Esophagus muscularis mucosa (tissue), 4 donors: ENCODE measurements at regions of chr12 and their contacts with region 1.

Region 1: GRCh38 chr12:55797068-55797467 is 20.5 kb downstream of the SARNP start:
- DNase-seq: no peak
- H3K4me3 ChIP-seq: no peak overlapping the region
- H3K27ac ChIP-seq: no peak overlapping the region
- H3K4me1 ChIP-seq: peaks cover 0 to 9% (median 0%) of the 10 kb centered on the region in 4 donors
- H3K27me3 ChIP-seq: no peaks in the 10 kb centered on the region
- CTCF ChIP-seq: peak in 2 of 3 experiments; percentile 43 to 49
- EP300 ChIP-seq: no peak
- POLR2A ChIP-seq: no peak

Region 2: DNA sequence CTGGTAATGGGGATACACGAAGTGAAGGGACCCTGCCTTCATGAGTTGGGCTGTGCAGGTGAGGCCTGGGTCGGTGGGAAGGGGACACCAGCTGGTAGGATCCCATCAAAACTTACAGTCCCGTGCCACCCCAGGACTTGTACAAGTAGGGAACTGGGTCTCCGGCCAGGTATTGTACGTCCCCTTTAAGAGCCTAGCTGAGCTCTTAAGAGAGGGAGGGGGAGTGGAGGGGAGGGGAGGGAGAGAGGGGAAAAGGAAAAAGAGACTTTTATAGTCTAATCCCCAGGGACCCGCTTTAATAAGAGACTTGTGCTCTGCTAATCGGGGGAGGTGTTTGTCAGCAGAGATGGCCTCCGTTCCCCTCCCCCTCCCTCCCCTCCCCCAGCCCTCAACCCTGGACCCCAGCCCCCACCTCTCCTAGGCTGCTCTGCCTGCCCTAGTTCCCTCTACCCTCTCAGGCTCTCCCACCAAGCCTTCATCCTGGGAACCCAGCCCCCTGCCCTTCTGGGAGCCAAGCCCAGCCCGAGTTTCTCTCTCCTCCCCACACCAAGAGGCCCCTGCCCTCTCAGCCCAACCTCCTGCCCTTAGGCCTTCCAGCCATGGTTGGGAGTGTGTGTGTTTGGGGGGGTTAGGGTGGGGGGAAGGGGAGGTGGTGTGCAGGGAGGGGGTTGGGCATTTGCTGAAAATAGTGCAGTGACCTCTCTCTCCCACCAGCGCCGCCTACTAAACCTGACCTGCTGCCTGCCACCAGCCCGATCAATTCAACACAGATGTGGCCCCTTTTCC is 51.5 kb before region 1 on chr12:
- intact Hi-C with region 1: loop called (anchors 5 kb)
- DNase-seq: no peak
- H3K4me3 ChIP-seq: peak overlapping the region; percentile 8 to 34 (median 16)
- H3K27ac ChIP-seq: peak overlapping the region; percentile 38 to 75 (median 50)
- H3K4me1 ChIP-seq: peaks cover 23 to 50% (median 40%) of the 10 kb centered on the region in 4 donors
- H3K27me3 ChIP-seq: no peaks in the 10 kb centered on the region
- CTCF ChIP-seq: no peak
- EP300 ChIP-seq: no peak
- POLR2A ChIP-seq: no peak